Posterior cingulate gyrus (tissue), 11 donors: ENCODE measurements at regions of chr12 and their contacts with region 1.

Region 1: DNA sequence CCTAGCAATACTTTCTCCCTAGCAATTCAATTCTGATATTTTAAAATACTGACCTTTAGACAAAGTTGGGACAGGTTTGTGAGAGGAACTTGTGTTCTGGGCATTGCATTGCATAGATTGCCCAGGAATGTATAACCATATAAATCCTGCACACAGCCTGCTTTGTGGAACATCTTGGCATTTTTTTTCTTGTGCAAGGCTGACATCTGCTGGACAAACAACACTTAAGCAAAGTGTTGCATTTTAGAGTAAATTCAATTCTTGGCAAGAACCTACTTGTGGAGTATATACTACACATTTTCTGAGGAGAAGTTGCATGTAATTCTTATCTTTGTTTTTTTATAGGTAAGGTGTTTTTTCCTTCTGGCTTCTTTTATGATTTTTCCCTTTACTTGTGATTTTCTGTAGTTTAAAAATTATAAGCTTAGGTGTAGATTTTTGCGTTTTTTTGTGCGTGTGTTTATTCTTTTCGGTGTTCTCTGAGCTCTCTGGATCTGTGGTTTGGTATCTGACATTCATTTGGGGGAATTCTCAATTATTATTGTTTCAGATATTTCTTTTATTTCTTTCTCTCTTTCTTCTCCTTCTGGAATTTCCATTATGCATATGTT is 26.4 kb downstream of the TESPA1 start:
- DNase-seq: peak in 4 of 10 donors; percentile 31 to 58 (median 40)

Region 2: DNA sequence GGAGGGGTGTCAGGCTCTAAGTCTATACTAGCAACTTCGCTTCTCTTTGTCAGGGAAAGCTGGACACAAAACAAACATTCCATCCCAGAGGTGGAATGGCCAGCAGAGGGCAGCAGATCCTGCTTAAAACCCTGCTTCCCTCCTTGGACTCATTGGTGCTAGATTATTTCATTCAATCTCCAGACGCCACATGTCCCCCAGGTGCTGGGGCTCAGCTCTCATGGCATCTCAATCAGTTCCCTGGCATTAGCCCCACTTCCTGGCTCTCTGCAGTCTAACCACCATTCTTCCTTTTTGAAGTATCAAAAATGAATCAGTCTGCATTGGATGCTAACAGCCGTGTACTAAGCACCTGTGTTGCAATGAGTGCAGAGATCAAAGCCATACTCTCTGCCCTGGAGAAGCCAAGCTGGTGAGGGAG is 361.6 kb before region 1 on chr12:
- intact Hi-C with region 1: loop called (anchors 10 kb)
- DNase-seq: peak in 9 of 10 donors; percentile 50 to 93 (median 75)

Region 3: DNA sequence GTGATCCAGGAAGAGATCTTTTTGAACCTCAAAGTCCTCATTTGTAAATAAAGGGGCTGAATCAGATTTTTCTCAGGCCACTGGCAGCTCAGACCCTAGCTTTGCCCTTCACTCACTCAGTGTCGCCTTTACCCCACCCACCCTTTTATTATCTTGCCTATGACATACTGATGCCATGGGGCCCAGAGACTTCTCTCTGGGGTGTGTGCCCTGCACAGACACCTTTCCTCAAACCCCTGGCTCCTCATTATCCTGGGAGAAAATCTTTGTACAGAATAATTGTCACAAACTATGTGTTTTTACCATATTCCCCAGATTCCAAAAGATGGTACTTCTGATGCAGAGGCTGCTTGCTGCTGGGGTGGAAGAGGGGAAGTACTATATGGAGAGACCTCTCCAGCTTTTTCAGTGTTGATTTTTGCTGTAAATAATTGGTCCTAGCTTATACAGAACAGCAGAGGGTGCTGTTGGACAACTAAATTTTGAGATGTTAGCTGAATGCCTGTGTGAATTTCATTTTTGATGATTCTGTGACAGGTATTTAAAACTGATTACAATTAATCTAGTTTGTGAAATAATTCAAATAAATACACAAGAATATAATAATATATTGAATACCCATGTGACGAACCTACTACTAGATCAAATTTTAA is 256.1 kb before region 1 on chr12:
- intact Hi-C with region 1: loop called (anchors 1 kb)
- DNase-seq: no peak

Region 4: DNA sequence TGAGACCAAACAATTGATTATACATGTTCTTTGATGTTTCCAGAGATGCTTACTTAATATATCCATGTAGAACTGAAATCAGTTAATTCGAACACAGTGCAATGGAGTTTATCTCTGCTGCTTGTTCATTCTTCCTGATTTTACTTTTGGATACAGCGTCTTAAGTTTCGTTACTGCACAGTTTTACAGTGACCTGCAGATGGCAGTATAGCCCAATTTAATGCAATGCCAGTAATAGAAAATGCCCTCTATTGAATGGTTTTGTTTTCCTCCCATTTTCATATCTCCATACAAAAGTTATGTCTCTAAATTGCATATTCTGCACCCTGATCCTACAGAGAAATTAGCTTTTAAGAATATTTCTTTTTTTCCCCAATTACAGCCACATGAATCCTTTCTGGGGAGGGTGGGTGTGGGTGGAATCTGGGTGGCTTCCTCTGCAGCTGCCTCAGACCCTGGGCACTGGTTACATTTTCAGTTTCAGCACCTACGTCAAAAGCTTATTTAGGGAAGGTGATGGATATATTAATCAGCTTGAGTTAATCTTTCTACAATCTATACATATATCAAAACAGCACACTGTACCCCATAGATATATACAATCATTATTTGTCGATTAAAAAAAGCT is 208.8 kb before region 1 on chr12:
- intact Hi-C with region 1: loop called (anchors 1 kb)
- DNase-seq: no peak

Region 5: GRCh38 chr12:54853995-54854566 is 104.1 kb before region 1 on chr12 and contains the start of gene MUCL1:
- intact Hi-C with region 1: loop called (anchors 1 kb)
- DNase-seq: peak in 3 of 10 donors; percentile 20 to 44 (median 22)

Region 6: DNA sequence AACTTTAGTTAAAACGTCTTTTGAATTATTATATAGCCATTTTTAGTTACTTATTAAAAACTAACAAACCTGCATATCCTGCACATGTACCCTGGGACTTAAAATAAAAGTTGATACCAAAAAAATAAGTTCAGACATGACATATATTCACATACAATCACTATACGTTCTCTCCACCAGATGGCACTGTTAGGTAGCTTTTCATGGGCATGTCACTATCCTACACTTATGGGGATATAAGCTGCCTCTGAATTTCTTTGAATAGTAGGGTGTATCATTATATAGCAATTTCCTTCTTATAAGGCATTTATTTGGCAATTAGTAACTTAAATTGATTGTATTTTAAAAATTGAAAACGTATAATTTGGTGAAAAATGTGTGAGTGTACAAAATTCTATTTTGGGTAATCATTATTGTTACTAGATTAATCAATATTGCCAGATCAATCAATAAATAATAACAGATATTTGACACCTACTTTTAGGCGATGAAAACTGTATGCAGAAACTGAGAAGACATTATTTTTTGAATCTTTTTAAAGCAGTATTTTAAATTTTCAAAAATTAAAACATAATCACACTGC is 230.9 kb after region 1 on chr12:
- intact Hi-C with region 1: no loop called
- DNase-seq: peak in 2 of 10 donors; percentile 35 to 63